ENCODE measurements at regions of chr4 and their contacts with region 1.

Region 1: GRCh38 chr4:26936284-26937065 is 75.8 kb downstream of the STIM2 start:
- DNase-seq: no peak
- ATAC-seq: no peak
- H3K4me3 ChIP-seq: no peak overlapping the region
- H3K27ac ChIP-seq: no peak overlapping the region
- H3K4me1 ChIP-seq: no peaks in the 10 kb centered on the region
- H3K27me3 ChIP-seq: no peaks in the 10 kb centered on the region
- CTCF ChIP-seq: no peak

Region 2: GRCh38 chr4:25943312-25943711 is 993.2 kb before region 1 on chr4:
- CTCF ChIA-PET with region 1: no interaction called
- POLR2A ChIA-PET with region 1: interaction called, 10 read pairs
- intact Hi-C with region 1: no loop called
- DNase-seq: no peak
- ATAC-seq: no peak
- H3K4me3 ChIP-seq: no peak overlapping the region
- H3K27ac ChIP-seq: no peak overlapping the region
- H3K4me1 ChIP-seq: no peaks in the 10 kb centered on the region
- H3K27me3 ChIP-seq: no peaks in the 10 kb centered on the region
- CTCF ChIP-seq: no peak

Region 3: DNA sequence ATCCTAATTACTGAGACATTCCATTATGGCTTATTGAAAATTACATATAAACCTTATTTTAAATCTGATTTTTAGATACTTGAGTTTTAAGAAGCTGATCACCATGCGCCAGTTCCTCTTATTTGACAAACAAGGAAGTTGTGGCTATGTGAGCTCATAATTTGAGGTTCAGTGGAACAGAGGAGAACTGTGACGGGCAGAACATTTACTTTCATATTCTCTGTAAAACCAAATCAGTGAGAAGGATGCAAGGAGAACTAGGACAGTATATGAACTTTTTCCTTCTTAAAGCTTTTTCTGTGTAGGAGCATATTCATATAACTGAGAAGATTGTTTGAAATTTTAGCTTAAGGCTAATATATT is 50.6 kb before region 1 on chr4:
- CTCF ChIA-PET with region 1: no interaction called
- POLR2A ChIA-PET with region 1: no interaction called
- intact Hi-C with region 1: no loop called
- DNase-seq: no peak
- ATAC-seq: no peak
- H3K4me3 ChIP-seq: no peak overlapping the region
- H3K27ac ChIP-seq: no peak overlapping the region
- H3K4me1 ChIP-seq: no peaks in the 10 kb centered on the region
- H3K27me3 ChIP-seq: no peaks in the 10 kb centered on the region
- CTCF ChIP-seq: no peak

Region 4: GRCh38 chr4:26959654-26960047 is 23.2 kb after region 1 on chr4:
- CTCF ChIA-PET with region 1: no interaction called
- POLR2A ChIA-PET with region 1: no interaction called
- intact Hi-C with region 1: no loop called
- DNase-seq: no peak
- ATAC-seq: no peak
- H3K4me3 ChIP-seq: no peak overlapping the region
- H3K27ac ChIP-seq: no peak overlapping the region
- H3K4me1 ChIP-seq: peaks cover 8% of the 10 kb centered on the region
- H3K27me3 ChIP-seq: no peaks in the 10 kb centered on the region
- CTCF ChIP-seq: no peak

Measured in PC-3 (cell line).